ENCODE measurements at regions of chr12 and their contacts with region 1.

Region 1: GRCh38 chr12:51217968-51218606 is at the start of gene POU6F1:
- DNase-seq: peak; percentile 64 to 81 (median 76)
- ATAC-seq: peak; percentile 88
- H3K4me3 ChIP-seq: peak within 1 kb of the TSS; percentile 90
- H3K4me3 Mint-ChIP-seq: peak within 1 kb of the TSS; percentile 82 to 98 (median 95)
- H3K27ac ChIP-seq: peak within 1 kb of the TSS; percentile 98
- H3K27ac Mint-ChIP-seq: peak within 1 kb of the TSS; percentile 83 to 98 (median 96)
- H3K4me1 ChIP-seq: peaks cover 10% of the 10 kb centered on the region in 2 donors
- H3K4me1 Mint-ChIP-seq: peaks cover 13 to 43% (median 33%) of the 10 kb centered on the region in 7 donors
- H3K27me3 ChIP-seq: no peaks in the 10 kb centered on the region
- H3K27me3 Mint-ChIP-seq: no peaks in the 10 kb centered on the region
- total RNA-seq, gene POU6F1: 5.1 to 85.5 (median 33.5) TPM

Region 2: GRCh38 chr12:50677858-50678257 is 540.2 kb before region 1 on chr12:
- CTCF ChIA-PET with region 1: no interaction called
- POLR2A ChIA-PET with region 1: no interaction called
- intact Hi-C with region 1: no loop called
- DNase-seq: no peak
- ATAC-seq: no peak
- H3K4me3 ChIP-seq: no peak overlapping the region
- H3K4me3 Mint-ChIP-seq: no peak overlapping the region
- H3K27ac ChIP-seq: no peak overlapping the region
- H3K27ac Mint-ChIP-seq: peak overlapping the region in 2 of 9 donors; percentile 19 to 34
- H3K4me1 ChIP-seq: no peaks in the 10 kb centered on the region
- H3K4me1 Mint-ChIP-seq: no peaks in the 10 kb centered on the region
- H3K27me3 ChIP-seq: no peaks in the 10 kb centered on the region
- H3K27me3 Mint-ChIP-seq: no peaks in the 10 kb centered on the region

Region 3: GRCh38 chr12:51172515-51173431 is 45.3 kb before region 1 on chr12 and contains the start of gene TFCP2:
- CTCF ChIA-PET with region 1: interaction called, 3 read pairs
- POLR2A ChIA-PET with region 1: interaction called, 10 read pairs
- intact Hi-C with region 1: loop called (anchors 1 kb)
- DNase-seq: peak; percentile 81 to 93 (median 91)
- ATAC-seq: peak; percentile 98
- H3K4me3 ChIP-seq: peak within 1 kb of the TSS; percentile 98
- H3K4me3 Mint-ChIP-seq: peak within 1 kb of the TSS in 5 of 10 donors; percentile 77 to 89 (median 87)
- H3K27ac ChIP-seq: peak within 1 kb of the TSS; percentile 99
- H3K27ac Mint-ChIP-seq: peak within 1 kb of the TSS in 6 of 9 donors; percentile 56 to 90 (median 82)
- H3K4me1 ChIP-seq: peaks cover 5 to 7% of the 10 kb centered on the region in 2 donors
- H3K4me1 Mint-ChIP-seq: peaks cover 9 to 24% (median 14%) of the 10 kb centered on the region in 7 donors
- H3K27me3 ChIP-seq: no peaks in the 10 kb centered on the region
- H3K27me3 Mint-ChIP-seq: no peaks in the 10 kb centered on the region
- total RNA-seq, gene TFCP2: 23.4 to 42.3 (median 36.6) TPM

Region 4: GRCh38 chr12:51238510-51239334 is 20.6 kb after region 1 on chr12 and contains the start of gene DAZAP2:
- CTCF ChIA-PET with region 1: interaction called, 5 read pairs
- POLR2A ChIA-PET with region 1: interaction called, 128 read pairs
- intact Hi-C with region 1: loop called (anchors 1 kb)
- DNase-seq: peak; percentile 82 to 94 (median 92)
- ATAC-seq: peak; percentile 93
- H3K4me3 ChIP-seq: peak within 1 kb of the TSS; percentile 98
- H3K4me3 Mint-ChIP-seq: peak within 1 kb of the TSS; percentile 91 to 99 (median 97)
- H3K27ac ChIP-seq: peak within 1 kb of the TSS; percentile 100
- H3K27ac Mint-ChIP-seq: peak within 1 kb of the TSS; percentile 97 to 100 (median 100)
- H3K4me1 ChIP-seq: peaks cover 24 to 29% of the 10 kb centered on the region in 2 donors
- H3K4me1 Mint-ChIP-seq: peaks cover 36 to 50% (median 42%) of the 10 kb centered on the region in 7 donors
- H3K27me3 ChIP-seq: no peaks in the 10 kb centered on the region
- H3K27me3 Mint-ChIP-seq: peaks cover 0 to 4% (median 0%) of the 10 kb centered on the region in 5 donors
- total RNA-seq, gene DAZAP2: 231 to 306 (median 271) TPM

Region 5: DNA sequence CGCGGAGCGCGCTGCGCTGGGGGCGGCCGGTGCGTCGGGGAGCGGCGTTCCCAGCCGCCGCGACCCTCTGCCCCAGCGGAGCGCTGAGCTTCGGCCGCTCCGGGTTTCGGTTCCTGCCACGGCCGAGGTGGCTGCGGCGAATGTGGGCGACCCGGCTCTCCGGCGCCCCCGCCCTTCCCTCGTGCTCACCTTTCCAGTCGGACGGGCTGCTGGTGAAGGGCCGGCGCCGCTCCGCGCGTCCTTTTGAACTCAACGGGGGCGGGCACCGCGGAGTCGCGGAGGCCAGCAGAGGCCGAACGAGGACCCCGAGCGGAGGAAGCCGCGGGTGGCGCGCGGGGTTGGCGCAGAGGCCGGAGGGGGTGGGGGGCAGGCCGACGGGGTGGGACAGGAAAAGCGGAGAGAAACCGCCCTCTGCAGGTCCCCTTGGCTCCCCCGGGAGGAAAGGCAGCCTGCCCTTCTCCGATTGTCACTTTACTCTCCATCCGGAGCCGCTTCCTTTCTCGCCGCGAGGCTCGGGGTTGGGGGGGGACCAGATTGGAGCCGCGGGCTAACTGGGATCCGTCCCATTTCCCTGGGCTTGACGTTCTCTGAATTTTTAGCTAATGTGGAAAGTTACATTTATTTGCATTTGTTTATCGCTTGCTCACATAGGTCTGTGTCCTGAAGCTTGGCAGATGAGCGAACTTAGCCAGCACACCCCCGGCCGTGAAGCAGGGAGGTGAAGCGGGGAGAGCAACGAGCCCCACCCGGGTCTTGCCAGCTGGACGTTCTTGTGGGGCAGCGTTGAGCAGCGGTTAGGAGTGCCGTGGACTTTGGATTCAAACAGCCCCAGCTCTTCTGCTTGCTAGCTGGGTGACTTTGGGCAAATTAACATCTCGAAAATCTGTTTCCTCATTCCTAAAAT is 52.2 kb after region 1 on chr12 and contains the start of gene SMAGP:
- CTCF ChIA-PET with region 1: no interaction called
- POLR2A ChIA-PET with region 1: interaction called, 4 read pairs
- intact Hi-C with region 1: loop called in 1 of 2 experiments (anchors 10 kb)
- DNase-seq: peak; percentile 13 to 62 (median 36)
- ATAC-seq: peak; percentile 68
- H3K4me3 ChIP-seq: peak within 1 kb of the TSS; percentile 57
- H3K4me3 Mint-ChIP-seq: peak within 1 kb of the TSS; percentile 90 to 98 (median 94)
- H3K27ac ChIP-seq: peak within 1 kb of the TSS; percentile 62
- H3K27ac Mint-ChIP-seq: peak within 1 kb of the TSS; percentile 55 to 96 (median 90)
- H3K4me1 ChIP-seq: peaks cover 5 to 20% of the 10 kb centered on the region in 2 donors
- H3K4me1 Mint-ChIP-seq: peaks cover 19 to 29% (median 24%) of the 10 kb centered on the region in 7 donors
- H3K27me3 ChIP-seq: no peaks in the 10 kb centered on the region
- H3K27me3 Mint-ChIP-seq: peaks cover 0 to 34% (median 0%) of the 10 kb centered on the region in 5 donors
- total RNA-seq, gene SMAGP: 1.5 to 7.4 (median 4.2) TPM

Region 6: DNA sequence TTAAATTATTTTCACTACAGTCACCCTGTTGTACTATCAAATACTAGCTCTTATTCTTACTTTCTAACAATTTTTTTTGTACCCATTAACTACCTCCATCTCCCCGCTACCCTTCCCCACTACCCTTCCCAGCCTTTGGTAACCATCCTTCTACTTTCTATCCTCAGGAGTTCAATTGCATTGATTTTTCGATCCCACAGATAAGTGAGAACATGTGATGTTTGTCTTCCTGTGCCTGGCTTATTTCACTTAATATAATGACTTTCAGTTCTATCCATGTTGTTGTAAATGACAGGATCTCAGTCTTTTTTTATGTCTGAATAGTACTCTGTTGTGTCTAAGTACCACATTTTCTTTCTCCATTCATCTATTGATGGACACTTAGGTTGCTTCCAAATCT is 512.7 kb after region 1 on chr12:
- CTCF ChIA-PET with region 1: no interaction called
- POLR2A ChIA-PET with region 1: no interaction called
- intact Hi-C with region 1: no loop called
- DNase-seq: no peak
- ATAC-seq: no peak
- H3K4me3 ChIP-seq: no peak overlapping the region
- H3K4me3 Mint-ChIP-seq: no peak overlapping the region
- H3K27ac ChIP-seq: no peak overlapping the region
- H3K27ac Mint-ChIP-seq: no peak overlapping the region
- H3K4me1 ChIP-seq: no peaks in the 10 kb centered on the region
- H3K4me1 Mint-ChIP-seq: no peaks in the 10 kb centered on the region
- H3K27me3 ChIP-seq: no peaks in the 10 kb centered on the region
- H3K27me3 Mint-ChIP-seq: peaks cover 20 to 47% (median 38%) of the 10 kb centered on the region in 5 donors